Activated CD8-positive, alpha-beta T cell treated with anti-CD3 and anti-CD28 coated beads for 36 hours (primary cell): ENCODE measurements at regions of chr5 and their contacts with region 1.

Region 1: DNA sequence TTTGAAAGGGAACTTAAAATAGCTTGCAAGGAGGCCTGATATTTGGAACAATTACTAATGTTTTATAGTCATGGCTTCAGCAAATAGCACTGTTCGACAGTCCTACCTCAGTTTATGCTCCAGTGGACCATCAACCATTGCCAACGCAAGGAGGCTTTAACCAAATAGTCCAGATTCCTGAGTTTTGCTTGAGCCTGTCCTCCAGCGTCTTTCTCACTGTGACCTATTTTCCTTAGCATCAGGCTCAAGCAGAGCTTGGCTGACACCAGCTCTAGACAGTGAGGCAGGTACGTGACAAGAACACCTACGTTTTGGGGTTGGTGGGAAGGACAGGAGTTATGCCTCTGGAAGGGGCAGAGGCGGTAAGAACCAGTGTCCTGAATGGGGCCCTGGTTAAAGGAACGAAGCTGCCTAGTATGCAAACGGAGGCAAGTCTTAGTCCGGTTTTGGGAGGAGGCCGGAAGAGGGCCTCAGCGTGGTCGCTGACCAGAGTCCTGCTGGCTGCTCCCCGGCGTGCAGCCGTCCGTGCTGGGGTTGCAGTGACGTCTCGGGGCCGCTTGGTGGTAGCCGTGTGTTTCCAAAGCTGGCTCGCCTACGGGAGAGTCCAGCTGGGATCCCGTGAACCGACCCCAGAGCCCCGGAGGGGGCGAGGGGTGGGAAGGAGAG is 998 bp upstream of the FGF18 start:
- DNase-seq: peak; percentile 66
- ATAC-seq: peak; percentile 75
- H3K4me3 Mint-ChIP-seq: peak overlapping the region; percentile 55
- H3K27ac Mint-ChIP-seq: no peak overlapping the region
- H3K4me1 Mint-ChIP-seq: peaks cover 14% of the 10 kb centered on the region
- H3K27me3 Mint-ChIP-seq: peaks cover 25% of the 10 kb centered on the region
- CTCF ChIP-seq: peak; percentile 96

Region 2: GRCh38 chr5:171152382-171152781 is 266.1 kb before region 1 on chr5:
- CTCF ChIA-PET with region 1: no interaction called
- POLR2A ChIA-PET with region 1: no interaction called
- intact Hi-C with region 1: no loop called
- DNase-seq: no peak
- ATAC-seq: no peak
- H3K4me3 Mint-ChIP-seq: no peak overlapping the region
- H3K27ac Mint-ChIP-seq: no peak overlapping the region
- H3K4me1 Mint-ChIP-seq: no peaks in the 10 kb centered on the region
- H3K27me3 Mint-ChIP-seq: peaks cover 4% of the 10 kb centered on the region
- CTCF ChIP-seq: no peak

Region 3: DNA sequence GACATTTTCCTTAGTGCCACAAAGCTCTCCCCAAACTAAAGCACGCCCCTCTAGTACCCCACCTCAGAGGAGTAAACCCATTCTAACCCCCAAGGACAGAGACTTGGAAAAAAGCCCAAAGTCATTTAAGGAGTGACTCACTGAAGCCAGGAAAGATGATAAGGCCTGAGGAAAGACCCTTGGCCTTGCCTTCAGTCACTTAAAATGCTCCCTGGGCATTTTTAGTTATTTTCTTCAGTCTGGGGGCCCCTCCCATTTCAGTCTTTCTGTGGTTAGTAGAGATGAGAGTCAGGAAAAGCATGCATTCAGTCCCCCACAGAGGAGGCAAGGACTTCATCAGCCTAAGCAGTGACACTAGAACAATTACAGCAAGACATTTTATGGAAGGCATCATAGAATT is 123.2 kb before region 1 on chr5:
- CTCF ChIA-PET with region 1: no interaction called
- POLR2A ChIA-PET with region 1: no interaction called
- intact Hi-C with region 1: no loop called
- DNase-seq: no peak
- ATAC-seq: no peak
- H3K4me3 Mint-ChIP-seq: no peak overlapping the region
- H3K27ac Mint-ChIP-seq: no peak overlapping the region
- H3K4me1 Mint-ChIP-seq: no peaks in the 10 kb centered on the region
- H3K27me3 Mint-ChIP-seq: peaks cover 3% of the 10 kb centered on the region
- CTCF ChIP-seq: no peak

Region 4: DNA sequence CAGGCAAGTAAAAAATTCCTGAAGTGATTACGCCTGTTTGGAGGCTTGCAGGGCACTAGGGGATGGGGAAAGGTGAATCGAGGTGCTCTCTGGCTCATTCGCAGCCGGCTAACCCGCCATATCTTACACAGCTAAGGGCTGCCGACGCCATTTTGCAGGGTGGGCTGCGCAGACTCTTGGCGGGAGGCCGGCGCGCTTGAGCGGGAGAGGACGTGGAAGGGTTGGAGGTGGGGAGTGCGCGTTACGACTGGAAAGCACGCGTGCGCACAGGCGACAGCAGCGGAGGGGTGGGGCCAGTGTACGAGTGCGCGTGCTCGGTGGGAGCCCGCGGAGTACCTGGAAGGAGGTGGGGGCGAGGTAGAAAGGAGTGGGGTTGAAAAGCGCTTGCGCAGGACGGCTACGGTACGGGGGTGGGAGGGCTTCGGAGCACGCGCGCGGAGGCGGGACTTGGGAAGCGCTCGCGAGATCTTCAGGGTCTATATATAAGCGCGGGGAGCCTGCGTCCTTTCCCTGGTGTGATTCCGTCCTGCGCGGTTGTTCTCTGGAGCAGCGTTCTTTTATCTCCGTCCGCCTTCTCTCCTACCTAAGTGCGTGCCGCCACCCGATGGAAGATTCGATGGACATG is 31.0 kb before region 1 on chr5 and contains the start of gene NPM1:
- CTCF ChIA-PET with region 1: interaction called, 3 read pairs
- POLR2A ChIA-PET with region 1: interaction called, 162 read pairs
- intact Hi-C with region 1: no loop called
- DNase-seq: peak; percentile 97
- ATAC-seq: peak; percentile 84
- H3K4me3 Mint-ChIP-seq: peak within 1 kb of the TSS; percentile 98
- H3K27ac Mint-ChIP-seq: peak within 1 kb of the TSS; percentile 100
- H3K4me1 Mint-ChIP-seq: peaks cover 37% of the 10 kb centered on the region
- H3K27me3 Mint-ChIP-seq: peaks cover 3% of the 10 kb centered on the region
- CTCF ChIP-seq: no peak
- total RNA-seq, gene NPM1: 3,203 to 3,498 TPM

Region 5: GRCh38 chr5:171405601-171406005 is 12.8 kb before region 1 on chr5:
- CTCF ChIA-PET with region 1: interaction called, 15 read pairs
- POLR2A ChIA-PET with region 1: interaction called, 162 read pairs
- intact Hi-C with region 1: no loop called
- DNase-seq: no peak
- ATAC-seq: peak; percentile 48
- H3K4me3 Mint-ChIP-seq: no peak overlapping the region
- H3K27ac Mint-ChIP-seq: no peak overlapping the region
- H3K4me1 Mint-ChIP-seq: peaks cover 46% of the 10 kb centered on the region
- H3K27me3 Mint-ChIP-seq: no peaks in the 10 kb centered on the region
- CTCF ChIP-seq: no peak

Region 6: GRCh38 chr5:171484460-171484899 is 66.0 kb after region 1 on chr5:
- CTCF ChIA-PET with region 1: interaction called, 15 read pairs
- POLR2A ChIA-PET with region 1: no interaction called
- intact Hi-C with region 1: no loop called
- DNase-seq: peak; percentile 66
- ATAC-seq: peak; percentile 58
- H3K4me3 Mint-ChIP-seq: no peak overlapping the region
- H3K27ac Mint-ChIP-seq: no peak overlapping the region
- H3K4me1 Mint-ChIP-seq: peaks cover 4% of the 10 kb centered on the region
- H3K27me3 Mint-ChIP-seq: peaks cover 8% of the 10 kb centered on the region
- CTCF ChIP-seq: peak; percentile 76

Region 7: GRCh38 chr5:171494452-171495121 is 76.1 kb after region 1 on chr5:
- CTCF ChIA-PET with region 1: no interaction called
- POLR2A ChIA-PET with region 1: no interaction called
- intact Hi-C with region 1: no loop called
- DNase-seq: no peak
- ATAC-seq: no peak
- H3K4me3 Mint-ChIP-seq: no peak overlapping the region
- H3K27ac Mint-ChIP-seq: no peak overlapping the region
- H3K4me1 Mint-ChIP-seq: no peaks in the 10 kb centered on the region
- H3K27me3 Mint-ChIP-seq: peaks cover 3% of the 10 kb centered on the region
- CTCF ChIP-seq: no peak

Region 8: GRCh38 chr5:171555160-171555559 is 136.7 kb after region 1 on chr5:
- CTCF ChIA-PET with region 1: no interaction called
- POLR2A ChIA-PET with region 1: no interaction called
- intact Hi-C with region 1: no loop called
- DNase-seq: no peak
- ATAC-seq: no peak
- H3K4me3 Mint-ChIP-seq: no peak overlapping the region
- H3K27ac Mint-ChIP-seq: no peak overlapping the region
- H3K4me1 Mint-ChIP-seq: no peaks in the 10 kb centered on the region
- H3K27me3 Mint-ChIP-seq: peaks cover 3% of the 10 kb centered on the region
- CTCF ChIP-seq: no peak

Region 9: GRCh38 chr5:171606414-171607024 is 188.1 kb after region 1 on chr5:
- CTCF ChIA-PET with region 1: interaction called, 7 read pairs
- POLR2A ChIA-PET with region 1: no interaction called
- intact Hi-C with region 1: loop called (anchors 10 kb)
- DNase-seq: no peak
- ATAC-seq: no peak
- H3K4me3 Mint-ChIP-seq: no peak overlapping the region
- H3K27ac Mint-ChIP-seq: no peak overlapping the region
- H3K4me1 Mint-ChIP-seq: peaks cover 2% of the 10 kb centered on the region
- H3K27me3 Mint-ChIP-seq: peaks cover 23% of the 10 kb centered on the region
- CTCF ChIP-seq: peak; percentile 49

Region 10: GRCh38 chr5:171850324-171851285 is 432.2 kb after region 1 on chr5:
- CTCF ChIA-PET with region 1: no interaction called
- POLR2A ChIA-PET with region 1: no interaction called
- intact Hi-C with region 1: loop called (anchors 10 kb)
- DNase-seq: no peak
- ATAC-seq: no peak
- H3K4me3 Mint-ChIP-seq: no peak overlapping the region
- H3K27ac Mint-ChIP-seq: no peak overlapping the region
- H3K4me1 Mint-ChIP-seq: peaks cover 2% of the 10 kb centered on the region
- H3K27me3 Mint-ChIP-seq: no peaks in the 10 kb centered on the region
- CTCF ChIP-seq: no peak

Region 11: DNA sequence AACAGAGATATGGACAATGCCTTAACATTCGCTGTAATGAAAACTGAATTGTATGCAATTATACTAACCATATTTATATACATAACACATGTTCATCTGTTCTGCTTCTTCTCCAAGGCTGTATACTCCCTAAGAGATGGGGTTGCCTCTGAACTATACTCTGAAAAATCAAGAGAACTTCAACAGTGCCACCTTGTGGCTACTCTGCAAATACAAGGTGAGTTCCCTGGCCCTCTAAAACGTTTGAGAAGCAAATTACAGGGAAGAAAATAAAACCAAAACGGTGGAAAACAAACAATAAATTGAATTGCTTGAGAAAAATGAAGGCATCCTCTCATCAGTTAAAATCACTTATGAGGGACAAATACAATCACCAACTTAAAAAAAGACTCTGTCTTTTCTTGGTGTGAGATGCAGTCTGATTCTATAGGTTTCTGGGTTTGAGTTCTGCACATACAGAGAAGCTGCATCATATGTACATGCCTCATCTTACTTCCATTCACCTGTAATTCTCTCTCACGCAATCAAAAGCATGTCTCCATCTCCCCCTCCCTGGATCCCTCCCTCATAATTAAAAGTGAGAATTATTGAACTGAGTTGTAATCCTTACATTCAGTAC is 489.4 kb after region 1 on chr5:
- CTCF ChIA-PET with region 1: interaction called, 24 read pairs
- POLR2A ChIA-PET with region 1: interaction called, 3 read pairs
- intact Hi-C with region 1: loop called (anchors 2 kb)
- DNase-seq: peak; percentile 67
- ATAC-seq: peak; percentile 81
- H3K4me3 Mint-ChIP-seq: no peak overlapping the region
- H3K27ac Mint-ChIP-seq: peak overlapping the region; percentile 79
- H3K4me1 Mint-ChIP-seq: peaks cover 63% of the 10 kb centered on the region
- H3K27me3 Mint-ChIP-seq: no peaks in the 10 kb centered on the region
- CTCF ChIP-seq: peak; percentile 88